CD4-positive, alpha-beta memory T cell (primary cell): ENCODE measurements at regions of chr1 and their contacts with region 1.

Region 1: GRCh38 chr1:103949779-103950178 is 200.1 kb downstream of the AMY1C start:
- DNase-seq: no peak
- H3K4me3 ChIP-seq: no peak overlapping the region
- H3K4me3 Mint-ChIP-seq: no peak overlapping the region
- H3K27ac ChIP-seq: no peak overlapping the region
- H3K27ac Mint-ChIP-seq: no peak overlapping the region
- H3K4me1 ChIP-seq: no peaks in the 10 kb centered on the region
- H3K4me1 Mint-ChIP-seq: no peaks in the 10 kb centered on the region
- H3K27me3 ChIP-seq: no peaks in the 10 kb centered on the region
- H3K27me3 Mint-ChIP-seq: no peaks in the 10 kb centered on the region

Region 2: DNA sequence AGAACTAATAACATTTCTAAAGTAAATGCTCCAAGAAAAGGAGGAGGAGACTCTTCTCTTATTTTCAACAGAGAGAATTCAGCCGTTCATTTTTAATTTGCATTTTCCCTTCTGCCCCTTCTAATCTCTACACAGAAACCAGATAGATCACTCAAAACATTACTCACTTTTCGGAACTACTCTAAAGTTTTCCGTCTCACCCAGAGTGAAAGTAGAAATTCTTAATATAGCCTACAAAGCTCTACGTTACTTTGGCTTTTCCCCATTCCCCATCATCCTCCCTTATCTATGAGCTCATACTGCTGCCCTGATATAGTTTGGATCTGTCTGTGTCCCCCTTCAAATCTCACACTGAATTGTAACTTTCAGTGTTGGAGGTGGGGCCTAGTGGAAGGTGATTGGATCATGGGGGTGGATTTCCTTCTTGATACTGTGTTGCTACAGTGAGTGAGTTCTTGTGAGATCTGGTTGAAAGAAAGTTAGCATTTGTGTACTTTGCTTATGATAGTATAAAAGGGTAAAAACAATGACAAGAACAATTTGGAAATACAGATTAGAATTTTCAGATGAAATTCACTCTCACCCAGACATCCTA is 11.9 kb before region 1 on chr1:
- CTCF ChIA-PET with region 1: no interaction called
- POLR2A ChIA-PET with region 1: no interaction called
- intact Hi-C with region 1: no loop called
- DNase-seq: no peak
- H3K4me3 ChIP-seq: no peak overlapping the region
- H3K4me3 Mint-ChIP-seq: no peak overlapping the region
- H3K27ac ChIP-seq: no peak overlapping the region
- H3K27ac Mint-ChIP-seq: no peak overlapping the region
- H3K4me1 ChIP-seq: no peaks in the 10 kb centered on the region
- H3K4me1 Mint-ChIP-seq: no peaks in the 10 kb centered on the region
- H3K27me3 ChIP-seq: no peaks in the 10 kb centered on the region
- H3K27me3 Mint-ChIP-seq: no peaks in the 10 kb centered on the region

Region 3: GRCh38 chr1:104878203-104878909 is 928.6 kb after region 1 on chr1:
- CTCF ChIA-PET with region 1: no interaction called
- POLR2A ChIA-PET with region 1: no interaction called
- intact Hi-C with region 1: loop called (anchors 5 kb)
- DNase-seq: no peak
- H3K4me3 ChIP-seq: no peak overlapping the region
- H3K4me3 Mint-ChIP-seq: no peak overlapping the region
- H3K27ac ChIP-seq: no peak overlapping the region
- H3K27ac Mint-ChIP-seq: no peak overlapping the region
- H3K4me1 ChIP-seq: no peaks in the 10 kb centered on the region
- H3K4me1 Mint-ChIP-seq: no peaks in the 10 kb centered on the region
- H3K27me3 ChIP-seq: no peaks in the 10 kb centered on the region
- H3K27me3 Mint-ChIP-seq: no peaks in the 10 kb centered on the region